Heart right ventricle (tissue), 16 donors: ENCODE measurements at regions of chr10 and their contacts with region 1.

Region 1: GRCh38 chr10:71396084-71396720 is 518 bp upstream of the CDH23 start:
- DNase-seq: peak; percentile 64 to 66
- ATAC-seq: peak; percentile 91 to 95 (median 92)
- H3K4me3 ChIP-seq: peak overlapping the region; percentile 38 to 70 (median 58)
- H3K27ac ChIP-seq: peak overlapping the region in 3 of 10 donors; percentile 30 to 69 (median 64)
- H3K4me1 ChIP-seq: peaks cover 5 to 27% (median 15%) of the 10 kb centered on the region in 9 donors
- H3K27me3 ChIP-seq: peaks cover 0 to 61% (median 36%) of the 10 kb centered on the region in 7 donors
- CTCF ChIP-seq: peak; percentile 51 to 87 (median 76)

Region 2: GRCh38 chr10:71040846-71041605 is 355.2 kb before region 1 on chr10:
- intact Hi-C with region 1: no loop called
- DNase-seq: peak in 1 of 2 donors; percentile 31
- ATAC-seq: peak in 7 of 8 donors; percentile 24 to 91 (median 80)
- H3K4me3 ChIP-seq: no peak overlapping the region
- H3K27ac ChIP-seq: no peak overlapping the region
- H3K4me1 ChIP-seq: peaks cover 0 to 13% (median 0%) of the 10 kb centered on the region in 9 donors
- H3K27me3 ChIP-seq: no peaks in the 10 kb centered on the region
- CTCF ChIP-seq: no peak

Region 3: GRCh38 chr10:71371750-71372166 is 24.4 kb before region 1 on chr10:
- intact Hi-C with region 1: no loop called
- DNase-seq: no peak
- ATAC-seq: peak in 3 of 8 donors; percentile 36 to 51 (median 39)
- H3K4me3 ChIP-seq: no peak overlapping the region
- H3K27ac ChIP-seq: peak overlapping the region in 1 of 10 donors; percentile 83
- H3K4me1 ChIP-seq: peaks cover 0 to 67% (median 3%) of the 10 kb centered on the region in 9 donors
- H3K27me3 ChIP-seq: peaks cover 0 to 12% (median 0%) of the 10 kb centered on the region in 7 donors
- CTCF ChIP-seq: no peak

Region 4: GRCh38 chr10:71486484-71487114 is 90.4 kb after region 1 on chr10:
- intact Hi-C with region 1: loop called in 5 of 10 experiments (anchors 2 to 10 kb)
- DNase-seq: peak in 1 of 2 donors; percentile 54
- ATAC-seq: peak in 7 of 8 donors; percentile 42 to 68 (median 55)
- H3K4me3 ChIP-seq: no peak overlapping the region
- H3K27ac ChIP-seq: no peak overlapping the region
- H3K4me1 ChIP-seq: peaks cover 0 to 9% (median 7%) of the 10 kb centered on the region in 9 donors
- H3K27me3 ChIP-seq: no peaks in the 10 kb centered on the region
- CTCF ChIP-seq: peak; percentile 21 to 67 (median 55)

Region 5: GRCh38 chr10:71608819-71609768 is 212.9 kb after region 1 on chr10:
- intact Hi-C with region 1: loop called in 4 of 10 experiments (anchors 1 to 10 kb)
- DNase-seq: peak; percentile 82
- ATAC-seq: peak in 6 of 8 donors; percentile 19 to 61 (median 51)
- H3K4me3 ChIP-seq: no peak overlapping the region
- H3K27ac ChIP-seq: no peak overlapping the region
- H3K4me1 ChIP-seq: peaks cover 8 to 26% (median 16%) of the 10 kb centered on the region in 9 donors
- H3K27me3 ChIP-seq: no peaks in the 10 kb centered on the region
- CTCF ChIP-seq: peak; percentile 69 to 83 (median 82)

Region 6: GRCh38 chr10:71708301-71708703 is 312.1 kb after region 1 on chr10:
- intact Hi-C with region 1: loop called in 5 of 10 experiments (anchors 2 to 5 kb)
- DNase-seq: peak; percentile 50 to 71
- ATAC-seq: peak; percentile 32 to 57 (median 42)
- H3K4me3 ChIP-seq: no peak overlapping the region
- H3K27ac ChIP-seq: no peak overlapping the region
- H3K4me1 ChIP-seq: peaks cover 3 to 33% (median 28%) of the 10 kb centered on the region in 9 donors
- H3K27me3 ChIP-seq: no peaks in the 10 kb centered on the region
- CTCF ChIP-seq: peak; percentile 64 to 96 (median 90)

Region 7: DNA sequence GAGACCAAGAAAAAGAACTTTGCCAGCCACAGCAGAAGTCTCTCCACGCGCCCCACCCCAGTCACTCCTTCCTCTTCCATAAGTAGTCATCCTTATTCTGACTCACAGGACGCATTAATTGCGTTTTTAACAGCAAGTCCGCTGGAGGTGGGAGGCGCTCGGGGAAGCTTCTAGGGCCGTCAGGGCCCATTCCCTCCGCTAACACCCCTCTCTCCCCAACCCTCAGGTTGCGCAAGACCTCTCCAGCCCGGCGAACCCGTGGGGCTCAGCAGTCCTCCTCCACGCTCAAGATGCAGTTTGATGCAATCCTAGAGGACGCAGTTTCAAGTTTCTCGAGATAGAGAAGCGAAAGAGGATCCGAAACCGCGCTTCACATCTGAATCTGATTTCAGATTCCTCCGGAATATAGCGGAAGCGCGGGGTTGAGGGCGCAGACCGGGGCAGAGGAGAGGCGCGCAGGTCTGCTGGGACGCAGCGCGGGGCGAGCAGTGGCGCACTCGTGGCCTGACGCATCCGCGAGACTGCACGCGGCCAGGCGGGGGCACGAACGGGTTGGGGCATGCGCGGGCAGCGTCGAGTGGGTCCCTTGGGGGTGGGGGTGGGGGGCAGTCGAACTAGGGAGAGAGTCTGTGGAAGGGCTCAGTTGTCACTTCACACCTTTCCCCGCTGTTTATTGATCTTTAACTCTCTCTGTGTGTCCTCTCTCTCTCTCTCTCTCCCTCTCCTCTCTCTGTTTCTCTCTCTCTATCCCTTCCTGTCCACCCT is 492.6 kb after region 1 on chr10:
- intact Hi-C with region 1: loop called in 2 of 10 experiments (anchors 10 kb)
- DNase-seq: peak; percentile 74 to 79
- ATAC-seq: peak; percentile 79 to 95 (median 92)
- H3K4me3 ChIP-seq: peak overlapping the region in 9 of 10 donors; percentile 38 to 71 (median 61)
- H3K27ac ChIP-seq: peak overlapping the region in 9 of 10 donors; percentile 48 to 93 (median 69)
- H3K4me1 ChIP-seq: peaks cover 0 to 62% (median 16%) of the 10 kb centered on the region in 9 donors
- H3K27me3 ChIP-seq: no peaks in the 10 kb centered on the region
- CTCF ChIP-seq: peak in 3 of 9 donors; percentile 10 to 30 (median 18)